SK-N-SH (cell line): ENCODE measurements at regions of chr3 and their contacts with region 1.

Region 1: DNA sequence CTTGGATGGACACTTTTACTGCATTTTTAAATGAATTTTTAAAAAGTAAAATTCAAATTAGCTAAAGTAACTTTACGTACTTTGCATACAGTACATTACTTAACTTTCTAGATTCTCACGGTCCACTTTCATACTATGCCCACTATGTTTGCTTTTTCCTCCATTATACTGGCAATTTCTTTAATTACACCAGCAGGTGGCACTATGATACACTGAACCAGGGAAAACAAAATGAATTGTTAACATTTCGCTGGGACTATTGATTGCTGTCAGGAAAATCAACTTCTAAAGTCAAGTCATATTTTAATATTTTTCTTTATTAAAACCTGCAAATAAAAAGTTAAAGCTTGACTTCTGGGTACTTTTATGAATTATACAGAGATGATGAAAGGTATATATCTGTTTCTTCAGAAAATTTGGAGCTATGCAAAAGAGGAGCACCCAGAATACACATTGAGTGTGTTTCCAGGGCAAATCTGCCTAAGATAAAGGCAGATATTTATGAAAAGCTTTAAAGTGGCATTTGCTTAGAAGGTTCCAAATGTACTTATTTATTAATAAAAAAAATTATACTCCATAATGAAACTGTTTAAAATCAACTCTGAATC is 21.8 kb upstream of the POU1F1 start:
- DNase-seq: peak; percentile 36
- H3K4me3 ChIP-seq: no peak overlapping the region; a peak in 1 of 4 replicates
- H3K27ac ChIP-seq: no peak overlapping the region
- H3K4me1 ChIP-seq: peaks cover 0 to 6% of the 10 kb centered on the region in 2 experiments; a peak in 1 of 4 replicates
- H3K27me3 ChIP-seq: peaks cover 23% of the 10 kb centered on the region
- CTCF ChIP-seq: peak; percentile 83
- EP300 ChIP-seq: no peak
- RAD21 ChIP-seq: peak; percentile 70

Region 2: GRCh38 chr3:87287011-87287410 is 11.2 kb before region 1 on chr3:
- CTCF ChIA-PET with region 1: interaction called, 14 read pairs
- POLR2A ChIA-PET with region 1: no interaction called
- DNase-seq: no peak
- H3K4me3 ChIP-seq: no peak overlapping the region
- H3K27ac ChIP-seq: no peak overlapping the region
- H3K4me1 ChIP-seq: no peaks in the 10 kb centered on the region
- H3K27me3 ChIP-seq: no peaks in the 10 kb centered on the region
- CTCF ChIP-seq: no peak
- EP300 ChIP-seq: no peak
- RAD21 ChIP-seq: no peak

Region 3: DNA sequence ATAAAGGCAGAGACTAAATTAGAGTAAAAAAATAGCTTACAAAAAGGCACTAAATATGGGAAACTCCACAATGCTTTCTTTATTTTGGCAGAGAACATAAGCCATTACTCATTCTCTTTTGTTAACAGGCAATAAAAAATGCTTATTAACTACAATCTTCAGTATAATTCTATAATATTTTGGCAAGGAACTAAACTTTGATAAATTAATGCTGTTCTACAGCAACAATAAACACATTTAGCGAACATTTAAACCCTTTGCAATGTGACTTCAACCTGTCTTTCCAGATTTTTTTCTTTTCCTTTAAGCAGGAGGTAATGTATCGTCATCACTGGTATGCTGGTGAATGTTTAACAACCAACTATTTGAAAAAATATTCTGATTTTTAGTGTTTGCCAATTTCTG is 20.4 kb after region 1 on chr3:
- CTCF ChIA-PET with region 1: interaction called, 11 read pairs
- POLR2A ChIA-PET with region 1: no interaction called
- DNase-seq: no peak
- H3K4me3 ChIP-seq: no peak overlapping the region
- H3K27ac ChIP-seq: no peak overlapping the region
- H3K4me1 ChIP-seq: no peaks in the 10 kb centered on the region; a peak in 1 of 4 replicates
- H3K27me3 ChIP-seq: peaks cover 14% of the 10 kb centered on the region; the same call in 1 of the 2 replicates
- CTCF ChIP-seq: no peak
- EP300 ChIP-seq: no peak
- RAD21 ChIP-seq: no peak

Region 4: DNA sequence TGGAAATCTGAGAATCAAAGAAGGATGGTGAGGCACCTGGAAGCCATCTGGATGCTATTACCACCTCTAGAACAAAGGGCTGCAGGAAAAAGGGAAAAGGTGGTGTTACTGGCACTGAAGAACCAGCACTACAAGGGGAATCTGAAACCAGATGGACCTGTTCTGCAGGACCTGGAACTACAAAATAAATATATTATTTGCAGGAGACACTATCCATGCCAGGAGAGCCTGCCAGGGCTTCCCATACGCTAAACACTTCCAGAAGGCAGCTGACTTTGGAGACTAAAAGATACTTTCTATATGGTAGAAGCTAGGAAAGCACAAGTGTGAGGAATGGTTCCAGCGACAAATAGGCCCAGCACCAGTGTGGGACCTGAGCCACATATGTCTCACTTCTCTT is 61.6 kb after region 1 on chr3:
- CTCF ChIA-PET with region 1: no interaction called
- POLR2A ChIA-PET with region 1: no interaction called
- DNase-seq: no peak
- H3K4me3 ChIP-seq: no peak overlapping the region
- H3K27ac ChIP-seq: no peak overlapping the region
- H3K4me1 ChIP-seq: no peaks in the 10 kb centered on the region
- H3K27me3 ChIP-seq: peaks cover 12% of the 10 kb centered on the region
- CTCF ChIP-seq: no peak
- EP300 ChIP-seq: no peak
- RAD21 ChIP-seq: no peak